HCT116 (cell line): ENCODE measurements at regions of chr10 and their contacts with region 1.

Region 1: DNA sequence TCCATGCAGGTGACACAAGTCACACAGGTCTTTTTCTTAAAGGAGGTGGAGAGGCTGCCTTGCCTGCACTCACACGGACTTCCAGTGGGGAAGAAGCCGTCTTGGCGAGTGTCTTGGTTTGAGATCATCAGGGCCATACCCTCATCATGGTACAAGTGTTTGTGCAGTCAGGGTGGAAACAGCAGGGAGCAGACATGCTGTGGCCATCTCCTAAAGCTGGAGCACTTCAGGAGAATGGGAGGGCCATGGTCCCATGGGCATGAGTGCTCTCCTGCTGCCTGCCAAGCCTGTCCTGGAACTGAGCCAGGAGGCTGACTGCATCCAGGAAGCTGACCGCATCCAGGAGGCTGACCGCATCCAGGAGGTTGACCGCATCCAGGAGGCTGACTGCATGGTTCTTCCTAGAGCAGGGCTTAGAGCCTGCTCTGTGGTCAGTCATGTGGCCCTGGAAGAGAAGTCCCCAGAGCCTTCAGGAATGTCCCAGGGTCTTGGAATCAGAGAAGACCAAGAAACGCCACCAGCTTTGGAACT is 98.4 kb downstream of the ADARB2 start:
- DNase-seq: no peak
- ATAC-seq: no peak
- H3K4me3 ChIP-seq: no peak overlapping the region
- H3K27ac ChIP-seq: no peak overlapping the region
- H3K4me1 ChIP-seq: no peaks in the 10 kb centered on the region
- H3K27me3 ChIP-seq: peaks cover 4% of the 10 kb centered on the region; the same call in 1 of the 2 replicates
- CTCF ChIP-seq: no peak
- POLR2A ChIP-seq: no peak
- RAD21 ChIP-seq: no peak

Region 2: GRCh38 chr10:2874963-2875362 is 1236.0 kb after region 1 on chr10:
- CTCF ChIA-PET with region 1: no interaction called
- POLR2A ChIA-PET with region 1: no interaction called
- RAD21 ChIA-PET with region 1: no interaction called
- intact Hi-C with region 1: loop called (anchors 5 kb)
- DNase-seq: no peak
- ATAC-seq: no peak
- H3K4me3 ChIP-seq: no peak overlapping the region
- H3K27ac ChIP-seq: no peak overlapping the region
- H3K4me1 ChIP-seq: no peaks in the 10 kb centered on the region
- H3K27me3 ChIP-seq: peaks cover 25% of the 10 kb centered on the region
- CTCF ChIP-seq: no peak
- POLR2A ChIP-seq: no peak
- RAD21 ChIP-seq: no peak